Dorsolateral prefrontal cortex (tissue), 120 donors: ENCODE measurements at regions of chr20 and their contacts with region 1.

Region 1: DNA sequence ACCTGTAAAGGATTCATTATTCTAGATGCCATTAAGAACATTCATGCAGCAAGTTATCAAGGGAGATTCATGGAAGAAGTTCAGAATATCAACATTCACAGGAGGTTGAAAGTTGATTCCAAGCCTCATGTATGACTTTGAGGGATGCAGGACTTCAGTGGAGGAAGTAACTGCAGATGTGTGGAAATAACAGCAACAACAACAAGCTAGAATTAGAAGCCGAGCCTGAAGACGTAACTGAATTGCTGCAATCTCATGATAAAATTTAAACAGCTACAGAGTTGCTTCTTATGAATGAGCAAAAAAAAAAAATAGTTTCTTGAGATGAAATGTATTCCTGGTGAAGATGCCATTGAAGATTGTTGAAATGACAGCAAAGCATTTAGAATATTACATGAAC is 73.3 kb upstream of the NXT1 start:
- DNase-seq: no peak
- H3K4me3 ChIP-seq: no peak overlapping the region
- H3K27ac ChIP-seq: no peak overlapping the region
- H3K27me3 ChIP-seq: no peaks in the 10 kb centered on the region
- CTCF ChIP-seq: no peak

Region 2: GRCh38 chr20:23103284-23104035 is 173.9 kb before region 1 on chr20:
- intact Hi-C with region 1: no loop called
- DNase-seq: no peak
- H3K4me3 ChIP-seq: no peak overlapping the region
- H3K27ac ChIP-seq: peak overlapping the region in 6 of 59 donors; percentile 5 to 70 (median 42)
- H3K27me3 ChIP-seq: peaks cover 0 to 3% (median 0%) of the 10 kb centered on the region in 45 donors
- CTCF ChIP-seq: no peak

Region 3: DNA sequence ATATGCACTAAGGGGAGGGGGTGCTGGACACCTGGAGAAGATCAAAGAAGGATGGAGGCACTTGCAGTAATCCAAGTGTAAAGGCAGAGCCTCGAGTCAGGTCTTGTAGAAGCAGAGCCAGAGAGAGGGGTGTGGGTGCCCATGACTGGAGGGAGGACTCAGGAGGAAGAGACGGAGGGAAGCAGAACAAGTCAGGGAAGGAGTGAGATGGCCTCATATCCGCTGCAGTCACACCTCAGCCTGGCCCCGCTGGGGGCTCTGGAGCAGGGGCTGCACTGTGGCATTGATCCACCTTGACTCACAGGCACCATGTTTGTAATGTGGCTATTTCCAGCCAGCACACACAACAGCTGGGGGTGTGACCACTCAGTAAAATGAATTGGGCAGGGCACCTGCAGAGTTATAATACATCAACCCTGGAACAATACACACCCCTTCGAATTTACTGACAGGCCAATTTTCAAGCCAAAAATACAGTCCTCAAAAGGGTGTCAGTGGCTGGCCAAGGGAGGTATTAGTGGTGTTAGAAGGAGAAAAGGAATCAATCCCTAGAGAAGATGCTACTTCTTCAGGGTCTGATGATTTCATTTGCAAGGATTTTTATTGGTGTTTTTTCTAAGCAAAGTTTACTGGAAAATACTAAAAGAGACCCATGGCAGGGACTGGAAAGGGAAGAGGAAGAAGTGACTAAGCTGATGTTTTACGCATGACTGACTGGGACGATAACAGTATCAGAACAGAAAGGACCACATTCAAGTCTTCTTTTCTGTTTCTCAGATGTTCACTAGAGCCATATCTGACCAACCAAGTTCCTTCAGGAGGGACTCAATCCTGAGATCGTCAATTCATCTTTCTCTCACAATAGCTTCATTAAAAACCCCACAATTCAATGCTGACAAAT is 54.4 kb after region 1 on chr20:
- intact Hi-C with region 1: loop called in 1 of 2 experiments (anchors 2 kb)
- DNase-seq: no peak
- H3K4me3 ChIP-seq: no peak overlapping the region
- H3K27ac ChIP-seq: no peak overlapping the region
- H3K27me3 ChIP-seq: peaks cover 0 to 3% (median 0%) of the 10 kb centered on the region in 45 donors
- CTCF ChIP-seq: no peak

Region 4: GRCh38 chr20:23374441-23374840 is 97.1 kb after region 1 on chr20:
- intact Hi-C with region 1: no loop called
- DNase-seq: no peak
- H3K4me3 ChIP-seq: no peak overlapping the region
- H3K27ac ChIP-seq: no peak overlapping the region
- H3K27me3 ChIP-seq: no peaks in the 10 kb centered on the region
- CTCF ChIP-seq: no peak

Region 5: DNA sequence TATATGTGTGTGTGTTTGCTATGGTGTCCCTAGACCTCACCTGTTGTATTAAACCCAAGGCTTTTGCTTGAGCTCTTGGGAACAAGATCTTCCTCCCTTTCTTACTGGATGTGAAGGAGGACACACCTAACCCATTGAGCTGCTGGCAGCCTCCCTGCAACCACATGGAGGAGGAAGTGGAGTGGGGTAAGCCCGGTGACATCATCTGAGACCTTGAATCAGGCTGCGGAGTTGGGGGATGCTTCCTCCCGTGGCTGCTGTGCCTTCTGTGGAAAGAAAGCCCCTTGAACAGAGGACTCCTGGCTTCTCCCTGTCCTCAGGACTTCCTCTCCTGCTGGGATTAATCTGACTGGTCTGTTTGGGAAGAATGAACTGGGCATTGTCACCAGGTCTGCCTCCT is 172.1 kb after region 1 on chr20:
- intact Hi-C with region 1: no loop called
- DNase-seq: no peak
- H3K4me3 ChIP-seq: no peak overlapping the region
- H3K27ac ChIP-seq: no peak overlapping the region
- H3K27me3 ChIP-seq: peaks cover 0 to 6% (median 0%) of the 10 kb centered on the region in 45 donors
- CTCF ChIP-seq: no peak